GM13976 (cell line): ENCODE measurements at regions of chr3 and their contacts with region 1.

Region 1: DNA sequence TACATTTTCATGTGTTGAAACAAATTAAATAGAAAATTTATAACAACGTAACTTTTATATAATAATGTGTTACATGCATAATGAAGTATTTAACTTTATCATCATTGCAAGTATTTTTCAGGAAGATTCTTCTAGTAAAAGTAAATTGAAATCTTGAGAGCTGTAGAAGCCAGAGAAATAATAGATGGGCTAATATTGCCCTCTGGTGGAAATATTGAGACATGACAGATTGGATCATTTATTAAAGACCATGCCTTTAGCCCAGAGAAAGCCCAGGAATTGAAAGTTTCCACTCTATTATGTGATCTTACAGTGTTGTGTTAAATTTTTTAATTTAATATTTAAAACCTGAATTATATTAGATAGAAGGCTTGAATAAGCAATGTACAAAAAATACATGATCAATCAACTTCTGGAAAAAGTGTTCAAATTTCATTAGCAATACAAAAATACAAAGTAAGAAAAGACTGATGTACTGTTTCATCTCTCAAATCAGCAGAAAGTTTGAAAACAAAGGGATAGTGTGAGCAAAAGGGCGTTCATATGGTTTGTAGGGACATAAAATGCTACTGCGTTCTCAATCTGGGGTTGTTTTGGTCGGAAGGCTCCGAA is 52.7 kb upstream of the SPTSSB start:
- DNase-seq: peak; percentile 58
- CTCF ChIP-seq: peak; percentile 38

Region 2: DNA sequence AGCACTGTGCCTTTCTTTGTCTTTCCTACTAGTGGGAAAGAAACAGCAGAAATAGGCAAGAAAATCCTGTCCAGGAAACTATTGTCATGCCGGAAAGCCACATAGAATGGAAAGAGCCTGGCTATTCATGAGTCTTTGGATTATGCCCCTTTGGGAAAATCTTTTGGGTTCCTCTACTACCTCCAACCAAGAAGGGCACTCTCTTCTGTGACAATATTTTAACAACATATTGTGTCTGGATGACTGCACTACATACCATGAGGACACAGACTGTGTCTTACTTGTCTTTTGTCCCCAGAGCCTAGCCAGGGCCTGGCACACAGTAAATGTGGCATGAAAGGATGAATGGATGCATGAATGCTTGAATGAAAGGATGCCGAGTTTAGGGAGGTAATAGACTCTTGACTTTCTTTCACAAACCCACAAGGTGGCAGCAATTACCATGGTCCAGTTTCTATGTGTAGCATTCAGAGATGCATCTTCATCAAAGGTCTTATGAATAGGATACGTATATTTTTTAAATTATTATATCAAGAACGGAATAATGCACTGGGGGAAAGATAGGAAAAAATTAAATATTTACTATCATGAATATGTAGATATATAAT is 716.7 kb before region 1 on chr3:
- in situ Hi-C with region 1: loop called (anchors 25 kb)
- DNase-seq: peak; percentile 27
- CTCF ChIP-seq: peak; percentile 31

Region 3: DNA sequence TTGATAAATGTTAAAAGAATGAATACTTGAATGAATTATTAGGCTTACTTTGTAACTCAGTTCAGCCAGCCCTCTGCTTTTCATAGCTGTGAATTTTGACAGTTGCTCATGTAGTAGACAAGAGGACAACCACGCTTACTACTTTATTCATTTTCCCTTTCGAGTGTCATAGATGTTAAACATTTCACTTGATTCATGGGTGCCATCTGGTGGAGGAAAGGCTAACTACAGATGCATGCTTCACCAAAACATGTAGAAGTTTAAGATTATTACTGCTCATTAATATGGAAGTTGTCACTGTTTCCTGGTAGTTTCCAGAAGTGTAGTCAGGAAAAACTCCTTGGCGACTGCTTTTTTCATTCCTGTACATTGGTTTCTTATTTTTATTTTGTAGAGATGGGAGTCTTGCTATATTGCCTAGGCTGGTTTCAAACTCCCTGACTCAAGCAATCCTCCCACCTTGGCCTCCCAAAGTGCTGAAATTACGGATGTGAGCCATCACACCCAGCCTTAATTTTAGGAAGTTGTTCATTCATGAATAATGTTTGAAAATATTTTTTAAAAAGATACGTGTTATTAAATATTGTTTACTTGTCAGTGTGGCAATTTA is 482.0 kb before region 1 on chr3:
- in situ Hi-C with region 1: loop called (anchors 25 kb)
- DNase-seq: peak; percentile 58
- CTCF ChIP-seq: peak; percentile 66

Region 4: DNA sequence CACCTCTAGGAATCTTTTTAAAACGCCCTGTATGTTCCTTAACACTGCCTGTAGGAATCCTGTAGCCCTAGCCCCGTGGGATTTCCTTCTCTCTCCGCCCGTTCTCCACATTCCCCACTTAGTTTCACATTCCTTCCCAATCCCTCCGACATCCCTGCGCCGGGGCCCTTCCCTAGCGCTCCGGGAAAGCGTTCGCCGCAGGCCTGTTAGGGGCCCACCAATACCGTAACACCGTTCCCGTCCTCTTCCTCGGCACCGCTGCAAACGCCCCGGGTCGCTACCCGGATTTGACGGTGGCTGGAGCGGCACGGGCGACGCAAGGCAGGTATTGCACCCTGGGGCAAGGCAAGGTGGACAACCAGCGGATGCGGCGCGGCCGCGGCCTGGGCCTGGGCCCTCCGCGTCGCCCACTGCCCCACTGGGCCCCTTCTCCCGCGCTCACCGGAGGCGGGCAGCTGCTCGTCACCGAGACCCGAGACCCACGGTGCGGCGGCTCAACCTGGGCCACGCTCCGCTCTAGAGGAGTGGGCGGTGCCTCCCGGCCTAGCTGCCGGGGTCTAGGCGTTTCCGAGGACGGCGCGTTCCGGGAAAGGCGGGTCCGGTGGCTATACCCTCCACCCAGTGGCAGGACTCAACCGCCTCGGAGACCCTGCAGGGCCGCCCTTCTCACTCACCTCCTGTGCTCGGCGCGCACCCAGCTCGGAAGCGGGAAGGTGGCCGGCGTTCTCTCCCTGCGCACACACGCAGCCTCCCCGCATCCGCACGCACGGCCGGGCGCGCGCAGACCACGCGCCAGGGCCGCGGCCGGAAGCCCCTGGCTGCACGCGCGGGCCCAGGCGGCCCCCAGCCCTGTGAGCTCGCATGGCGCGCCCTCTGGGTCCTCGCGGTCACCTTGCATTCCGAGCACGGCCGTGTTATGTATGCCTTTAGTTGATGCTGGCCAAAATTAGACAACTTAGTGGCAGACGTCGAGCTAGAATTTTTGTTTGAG is 319.2 kb before region 1 on chr3 and contains the start of gene B3GALNT1:
- in situ Hi-C with region 1: loop called (anchors 25 kb)
- DNase-seq: peak; percentile 62
- CTCF ChIP-seq: no peak